Endothelial cell of umbilical vein (primary cell): ENCODE measurements at regions of chr17 and their contacts with region 1.

Region 1: DNA sequence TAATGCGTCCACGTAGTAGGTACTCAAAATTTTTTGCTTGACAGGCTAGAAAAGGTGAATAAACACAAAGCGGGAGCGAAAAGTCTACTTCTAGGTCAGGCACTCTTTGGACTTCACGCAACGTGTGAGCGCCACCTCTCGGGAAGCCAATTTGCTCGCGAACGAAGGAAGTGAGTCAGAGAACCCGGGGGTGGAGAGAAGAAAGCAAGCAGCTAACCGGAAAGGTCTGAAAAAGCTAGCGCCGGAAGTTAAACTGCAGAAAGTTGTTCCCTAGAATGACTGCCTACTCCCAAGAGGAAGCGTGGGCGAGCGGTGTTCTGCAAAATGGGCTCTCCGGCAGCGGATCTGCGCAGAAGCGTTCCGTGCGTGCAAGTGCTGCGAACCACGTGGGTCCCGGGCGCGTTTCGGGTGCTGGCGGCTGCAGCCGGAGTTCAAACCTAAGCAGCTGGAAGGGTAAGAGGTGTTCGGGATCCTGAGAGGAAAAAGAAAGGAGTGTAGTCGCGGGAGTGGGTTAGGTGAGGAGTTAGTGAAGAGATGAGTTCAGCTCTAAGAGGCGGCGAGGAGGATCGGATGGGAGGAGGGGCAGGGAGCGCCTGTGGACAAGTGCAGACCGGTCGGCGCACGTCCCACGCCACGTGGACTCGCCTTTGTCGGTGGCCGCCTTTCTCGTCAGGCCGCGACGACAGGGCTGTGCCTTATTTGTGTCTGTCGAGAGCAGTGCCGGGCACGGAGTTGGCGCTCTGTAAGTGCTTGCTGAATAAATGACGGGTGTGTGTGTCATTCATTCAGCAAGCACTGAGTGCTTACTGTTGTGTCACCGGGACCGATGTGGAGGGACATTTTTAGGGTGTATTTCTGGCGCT is at the start of gene NME1:
- DNase-seq: peak; percentile 99
- H3K4me3 ChIP-seq: peak within 1 kb of the TSS; percentile 56 to 87 (median 85)
- H3K27ac ChIP-seq: peak within 1 kb of the TSS; percentile 70
- H3K4me1 ChIP-seq: peaks cover 14% of the 10 kb centered on the region
- H3K27me3 ChIP-seq: no peaks in the 10 kb centered on the region
- CTCF ChIP-seq: peak; percentile 82 to 96
- POLR2A ChIP-seq: peak; percentile 74
- total RNA-seq, gene NME1: 214 and 215 TPM in 2 replicates

Region 2: GRCh38 chr17:50853015-50853615 is 300.3 kb before region 1 on chr17:
- CTCF ChIA-PET with region 1: interaction called, 22 read pairs
- POLR2A ChIA-PET with region 1: no interaction called
- dilution Hi-C with region 1: no loop called
- intact Hi-C with region 1: loop called (anchors 5 kb)
- DNase-seq: peak; percentile 53
- H3K4me3 ChIP-seq: no peak overlapping the region
- H3K27ac ChIP-seq: no peak overlapping the region
- H3K4me1 ChIP-seq: peaks cover 10% of the 10 kb centered on the region
- H3K27me3 ChIP-seq: peaks cover 7 to 16% of the 10 kb centered on the region in 2 experiments
- CTCF ChIP-seq: no peak
- POLR2A ChIP-seq: no peak

Region 3: DNA sequence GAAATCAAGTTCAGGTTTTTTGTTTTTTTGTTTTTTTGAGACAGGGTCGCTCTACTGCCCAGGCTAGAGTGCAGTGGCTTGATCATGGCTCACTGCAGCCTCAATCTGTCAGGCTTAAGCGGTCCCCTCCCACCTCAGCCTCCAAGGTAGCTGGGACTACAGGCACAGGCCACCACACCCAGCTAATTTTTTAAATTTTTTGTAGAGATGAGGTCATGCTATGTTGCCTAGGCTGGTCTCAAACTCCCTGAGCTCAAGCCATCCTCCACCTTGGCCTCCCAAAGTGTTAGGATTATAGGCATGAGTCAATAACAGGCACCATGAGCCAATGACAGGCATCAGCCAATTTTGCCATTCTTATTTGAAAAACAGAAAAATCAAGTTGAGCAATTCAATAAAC is 157.8 kb before region 1 on chr17:
- CTCF ChIA-PET with region 1: interaction called, 140 read pairs
- POLR2A ChIA-PET with region 1: interaction called, 3 read pairs
- dilution Hi-C with region 1: no loop called
- intact Hi-C with region 1: no loop called
- DNase-seq: no peak
- H3K4me3 ChIP-seq: no peak overlapping the region
- H3K27ac ChIP-seq: no peak overlapping the region
- H3K4me1 ChIP-seq: no peaks in the 10 kb centered on the region
- H3K27me3 ChIP-seq: no peaks in the 10 kb centered on the region
- CTCF ChIP-seq: no peak
- POLR2A ChIP-seq: no peak

Region 4: GRCh38 chr17:51015145-51015558 is 138.3 kb before region 1 on chr17:
- CTCF ChIA-PET with region 1: interaction called, 12 read pairs
- POLR2A ChIA-PET with region 1: no interaction called
- dilution Hi-C with region 1: no loop called
- intact Hi-C with region 1: no loop called
- DNase-seq: peak; percentile 42
- H3K4me3 ChIP-seq: no peak overlapping the region
- H3K27ac ChIP-seq: no peak overlapping the region
- H3K4me1 ChIP-seq: peaks cover 8% of the 10 kb centered on the region
- H3K27me3 ChIP-seq: no peaks in the 10 kb centered on the region
- CTCF ChIP-seq: no peak
- POLR2A ChIP-seq: no peak

Region 5: GRCh38 chr17:51056813-51057510 is 96.5 kb before region 1 on chr17:
- CTCF ChIA-PET with region 1: interaction called, 34 read pairs
- POLR2A ChIA-PET with region 1: no interaction called
- dilution Hi-C with region 1: no loop called
- intact Hi-C with region 1: loop called (anchors 1 kb)
- DNase-seq: peak; percentile 84
- H3K4me3 ChIP-seq: no peak overlapping the region
- H3K27ac ChIP-seq: peak overlapping the region; percentile 2
- H3K4me1 ChIP-seq: peaks cover 16% of the 10 kb centered on the region
- H3K27me3 ChIP-seq: no peaks in the 10 kb centered on the region
- CTCF ChIP-seq: peak; percentile 33 to 46
- POLR2A ChIP-seq: no peak

Region 6: DNA sequence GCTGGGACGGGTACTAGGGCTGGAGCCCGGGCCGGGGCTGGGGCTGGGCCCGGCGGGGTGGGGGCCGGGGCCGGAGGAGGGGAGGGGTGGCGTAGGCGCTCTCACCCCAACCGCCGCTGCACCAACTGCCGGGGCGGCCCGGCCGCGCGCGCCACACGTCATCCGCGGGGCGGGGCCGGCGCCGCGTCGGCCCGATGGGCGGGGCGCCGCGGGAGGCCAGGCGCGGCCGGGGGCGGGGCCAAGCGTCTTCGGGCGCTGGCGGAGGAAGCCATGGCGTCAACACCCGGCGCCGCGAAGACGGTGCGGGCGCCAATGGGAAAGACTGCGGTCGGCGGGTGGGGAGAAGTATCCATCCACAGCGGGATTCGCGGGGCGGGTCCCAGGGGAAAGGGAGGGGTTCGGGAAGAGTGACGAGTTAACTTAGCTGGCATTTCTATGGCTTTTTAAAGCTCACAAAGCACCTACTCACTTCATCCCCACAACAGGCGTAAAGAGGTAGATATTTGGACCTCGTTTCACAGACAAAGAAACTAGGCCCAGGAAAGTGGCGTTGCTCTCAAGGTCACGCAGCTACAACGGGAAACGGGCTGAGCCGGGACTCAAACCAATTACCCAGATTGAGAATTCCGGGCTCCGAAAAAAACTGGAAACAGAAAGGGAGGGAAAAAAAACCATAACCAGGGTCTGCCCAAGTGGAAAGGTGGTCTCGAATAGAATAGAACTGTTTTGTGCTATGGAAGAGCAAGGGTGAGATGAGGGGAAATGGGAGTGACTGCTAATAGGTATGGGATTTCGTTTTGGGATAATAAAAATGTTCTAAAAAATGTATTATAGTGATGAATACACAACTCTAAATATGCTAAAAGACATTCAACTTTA is 32.5 kb before region 1 on chr17 and contains the start of gene SPAG9:
- CTCF ChIA-PET with region 1: interaction called, 42 read pairs
- POLR2A ChIA-PET with region 1: interaction called, 4 read pairs
- dilution Hi-C with region 1: no loop called
- intact Hi-C with region 1: loop called (anchors 1 kb)
- DNase-seq: peak; percentile 97
- H3K4me3 ChIP-seq: peak within 1 kb of the TSS; percentile 96 to 99 (median 96)
- H3K27ac ChIP-seq: peak within 1 kb of the TSS; percentile 100
- H3K4me1 ChIP-seq: peaks cover 31% of the 10 kb centered on the region
- H3K27me3 ChIP-seq: no peaks in the 10 kb centered on the region
- CTCF ChIP-seq: no peak
- POLR2A ChIP-seq: no peak
- total RNA-seq, gene SPAG9: 73.5 and 75.0 TPM in 2 replicates

Region 7: GRCh38 chr17:51166197-51166986 is 13.0 kb after region 1 on chr17 and contains the start of gene NME2:
- CTCF ChIA-PET with region 1: interaction called, 19 read pairs
- POLR2A ChIA-PET with region 1: interaction called, 5 read pairs
- dilution Hi-C with region 1: no loop called
- intact Hi-C with region 1: loop called (anchors 1 kb)
- DNase-seq: peak; percentile 79
- H3K4me3 ChIP-seq: peak within 1 kb of the TSS; percentile 45 to 63 (median 55)
- H3K27ac ChIP-seq: peak within 1 kb of the TSS; percentile 67
- H3K4me1 ChIP-seq: peaks cover 16% of the 10 kb centered on the region
- H3K27me3 ChIP-seq: no peaks in the 10 kb centered on the region
- CTCF ChIP-seq: peak in 1 of 2 donors; percentile 6
- POLR2A ChIP-seq: peak; percentile 74
- total RNA-seq, gene NME2: 555 and 565 TPM in 2 replicates

Region 8: DNA sequence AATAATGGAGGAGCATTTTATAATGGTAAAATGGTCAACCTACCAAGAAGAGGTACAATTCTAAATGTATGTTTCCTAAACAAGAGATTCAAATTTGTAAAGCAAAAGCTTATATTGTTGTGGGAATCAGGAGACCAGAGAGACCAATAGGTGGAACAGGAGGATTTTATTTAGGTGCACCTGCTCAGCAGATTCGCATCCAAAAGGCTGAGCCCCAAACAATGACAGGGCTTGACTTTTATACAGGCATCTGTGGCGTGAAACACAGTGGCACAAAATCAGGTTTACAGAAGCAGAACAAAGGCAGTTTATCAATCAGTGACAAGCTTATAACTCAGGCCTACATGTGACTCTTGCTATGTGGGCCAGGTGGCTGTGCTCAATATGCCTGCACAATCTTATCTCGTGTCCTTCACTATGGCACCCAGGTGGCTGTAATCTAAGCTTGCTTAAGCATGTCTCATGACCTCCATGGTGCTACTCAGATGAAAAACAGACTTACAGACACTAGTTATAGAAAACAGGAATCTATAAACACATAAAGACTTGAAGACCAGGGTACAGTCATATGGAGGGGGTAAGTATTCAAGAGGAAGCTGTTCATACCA is 1785.3 kb after region 1 on chr17:
- CTCF ChIA-PET with region 1: no interaction called
- POLR2A ChIA-PET with region 1: no interaction called
- dilution Hi-C with region 1: no loop called
- intact Hi-C with region 1: no loop called
- DNase-seq: no peak
- H3K4me3 ChIP-seq: no peak overlapping the region
- H3K27ac ChIP-seq: no peak overlapping the region
- H3K4me1 ChIP-seq: no peaks in the 10 kb centered on the region
- H3K27me3 ChIP-seq: no peaks in the 10 kb centered on the region
- CTCF ChIP-seq: no peak
- POLR2A ChIP-seq: no peak